Ascending aorta (tissue), 2 donors: ENCODE measurements at regions of chr3 and their contacts with region 1.

Region 1: DNA sequence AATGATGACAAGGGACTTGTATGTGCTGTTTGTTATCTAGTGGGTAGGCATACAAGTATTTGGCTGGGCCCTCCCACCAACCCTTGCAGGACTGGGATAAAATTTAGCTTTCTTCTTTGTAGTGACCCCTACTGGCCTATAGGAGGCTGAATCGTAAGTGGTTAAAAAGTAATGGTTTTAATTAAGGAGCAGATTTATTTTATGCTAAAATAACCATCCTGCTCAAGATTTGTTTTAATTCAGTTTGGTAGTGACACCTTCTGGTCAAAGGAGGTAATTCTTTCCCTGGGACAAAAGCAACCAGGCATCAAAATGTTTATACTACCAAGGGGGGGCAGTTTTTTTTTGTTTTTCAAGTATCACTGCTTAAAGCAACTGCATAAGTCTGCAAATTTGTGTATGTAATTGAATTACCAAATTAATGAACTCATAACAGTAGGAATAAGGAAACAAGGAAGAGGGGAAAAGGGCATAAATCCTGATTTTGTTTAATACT is 70.7 kb downstream of the TOP2B start:
- DNase-seq: no peak
- H3K4me3 ChIP-seq: no peak overlapping the region
- H3K27ac ChIP-seq: peak overlapping the region in 1 of 2 donors; percentile 12
- H3K4me1 ChIP-seq: peaks cover 0 to 19% of the 10 kb centered on the region in 2 donors
- H3K27me3 ChIP-seq: no peaks in the 10 kb centered on the region
- CTCF ChIP-seq: peak; percentile 59 to 80 (median 73)

Region 2: GRCh38 chr3:24680214-24680967 is 913.7 kb before region 1 on chr3:
- intact Hi-C with region 1: no loop called
- DNase-seq: peak in 1 of 2 donors; percentile 77
- H3K4me3 ChIP-seq: no peak overlapping the region
- H3K27ac ChIP-seq: peak overlapping the region in 1 of 2 donors; percentile 34
- H3K4me1 ChIP-seq: peaks cover 0 to 9% of the 10 kb centered on the region in 2 donors
- H3K27me3 ChIP-seq: no peaks in the 10 kb centered on the region
- CTCF ChIP-seq: peak; percentile 55 to 86 (median 80)

Region 3: DNA sequence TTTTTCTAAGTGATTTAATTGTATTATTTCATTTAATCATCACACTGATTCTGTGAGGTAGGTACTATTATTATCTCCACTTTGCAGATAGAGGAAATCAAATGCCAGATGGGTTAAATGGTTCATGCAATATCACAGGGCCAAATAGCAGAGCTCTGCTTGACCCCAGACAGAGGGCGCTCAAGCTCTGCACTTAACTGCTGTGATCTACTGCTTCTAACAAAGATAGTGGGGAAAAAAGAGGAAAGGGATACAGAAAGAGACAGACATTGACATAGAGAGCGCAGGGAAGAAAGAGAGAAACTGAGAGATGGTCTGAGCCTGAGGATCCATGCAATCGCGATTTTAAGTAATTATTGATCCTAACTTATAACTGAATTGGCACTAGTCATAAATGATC is 820.3 kb before region 1 on chr3:
- intact Hi-C with region 1: loop called (anchors 2 kb)
- DNase-seq: no peak
- H3K4me3 ChIP-seq: no peak overlapping the region
- H3K27ac ChIP-seq: no peak overlapping the region
- H3K4me1 ChIP-seq: no peaks in the 10 kb centered on the region
- H3K27me3 ChIP-seq: no peaks in the 10 kb centered on the region
- CTCF ChIP-seq: peak; percentile 42 to 71 (median 70)

Region 4: GRCh38 chr3:24963762-24964625 is 630.1 kb before region 1 on chr3:
- intact Hi-C with region 1: loop called (anchors 2 kb)
- DNase-seq: no peak
- H3K4me3 ChIP-seq: no peak overlapping the region
- H3K27ac ChIP-seq: no peak overlapping the region
- H3K4me1 ChIP-seq: peaks cover 0 to 3% of the 10 kb centered on the region in 2 donors
- H3K27me3 ChIP-seq: no peaks in the 10 kb centered on the region
- CTCF ChIP-seq: peak in 2 of 3 experiments; percentile 41 to 63

Region 5: DNA sequence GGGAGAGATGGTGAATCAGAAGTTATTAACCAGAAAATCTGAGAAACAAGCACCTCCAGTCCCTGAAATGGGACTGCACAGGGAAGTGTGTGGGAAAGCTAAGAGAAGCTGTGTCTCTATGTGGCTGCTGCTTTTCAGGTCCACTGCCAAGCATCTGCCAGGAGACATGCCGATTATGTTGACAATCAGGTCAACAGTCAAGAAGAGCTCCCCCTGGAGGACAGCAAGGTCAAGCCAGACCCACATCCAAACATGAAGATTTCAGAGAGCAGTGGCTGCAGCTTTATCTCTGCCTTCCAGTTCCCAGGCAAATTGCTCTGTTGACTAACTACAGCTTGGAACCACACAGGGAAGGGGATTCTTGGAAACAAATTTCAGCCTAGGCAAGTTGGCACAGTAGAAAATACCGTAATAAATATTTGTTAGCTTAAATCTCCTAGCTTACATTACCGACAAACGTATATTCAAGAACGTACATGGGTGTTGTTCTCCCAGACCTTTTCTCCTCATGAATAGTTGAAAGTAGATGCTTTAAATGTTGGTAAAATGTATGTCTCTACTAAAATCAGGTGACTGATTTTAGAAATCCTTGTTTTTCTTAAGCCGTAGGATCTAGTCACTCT is 560.5 kb before region 1 on chr3:
- intact Hi-C with region 1: loop called (anchors 10 kb)
- DNase-seq: no peak
- H3K4me3 ChIP-seq: no peak overlapping the region
- H3K27ac ChIP-seq: no peak overlapping the region
- H3K4me1 ChIP-seq: peaks cover 4 to 18% of the 10 kb centered on the region in 2 donors
- H3K27me3 ChIP-seq: no peaks in the 10 kb centered on the region
- CTCF ChIP-seq: peak in 2 of 3 experiments; percentile 39 to 40

Region 6: GRCh38 chr3:25427942-25428788 is 165.9 kb before region 1 on chr3 and contains the start of gene RARB:
- intact Hi-C with region 1: loop called (anchors 5 kb)
- DNase-seq: peak in 1 of 2 donors; percentile 84
- H3K4me3 ChIP-seq: peak within 1 kb of the TSS; percentile 70
- H3K27ac ChIP-seq: peak within 1 kb of the TSS; percentile 76 to 93
- H3K4me1 ChIP-seq: peaks cover 0 to 3% of the 10 kb centered on the region in 2 donors
- H3K27me3 ChIP-seq: no peaks in the 10 kb centered on the region
- CTCF ChIP-seq: no peak
- total RNA-seq, gene RARB: 52.7 TPM

Region 7: GRCh38 chr3:25508901-25509300 is 85.2 kb before region 1 on chr3:
- intact Hi-C with region 1: loop called (anchors 5 kb)
- DNase-seq: no peak
- H3K4me3 ChIP-seq: no peak overlapping the region
- H3K27ac ChIP-seq: peak overlapping the region; percentile 43 to 87
- H3K4me1 ChIP-seq: peaks cover 0 to 19% of the 10 kb centered on the region in 2 donors
- H3K27me3 ChIP-seq: no peaks in the 10 kb centered on the region
- CTCF ChIP-seq: no peak